Aorta (tissue), 5 donors: ENCODE measurements at regions of chr6 and their contacts with region 1.

Region 1: DNA sequence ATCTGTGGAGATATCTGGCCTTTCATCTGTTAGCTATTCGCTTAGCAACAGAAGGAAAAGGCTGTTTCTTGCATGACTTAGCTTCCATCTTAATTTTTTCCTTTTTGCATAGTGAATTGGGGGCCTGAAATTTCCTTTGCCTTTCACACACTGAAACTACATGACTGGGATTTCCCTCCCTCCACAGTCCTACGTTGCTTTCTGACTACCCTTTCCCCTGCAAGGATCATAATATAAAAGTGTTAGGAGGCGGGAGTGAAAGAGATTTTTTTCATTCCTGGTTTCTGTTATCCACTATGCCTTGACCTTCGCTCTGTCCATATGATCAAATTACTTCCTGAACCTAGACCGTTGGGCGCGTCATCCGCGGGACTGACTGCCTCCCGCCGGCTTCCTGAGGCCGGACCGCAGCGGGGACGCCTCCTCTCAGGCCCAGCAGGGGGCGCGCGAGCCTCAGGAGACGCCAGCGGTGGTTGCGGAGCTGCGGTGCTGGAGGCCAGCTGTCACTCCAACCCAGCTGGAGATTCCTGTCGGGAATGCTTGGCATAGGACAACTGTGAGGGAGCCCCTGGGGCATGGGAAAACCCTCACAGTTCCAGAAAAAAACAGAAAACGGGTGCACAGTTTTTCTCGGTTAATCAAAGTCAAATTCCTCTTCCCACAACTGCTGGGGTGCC is 55.6 kb downstream of the MEP1A start:
- DNase-seq: peak; percentile 90 to 96
- ATAC-seq: peak; percentile 95
- H3K4me3 ChIP-seq: no peak overlapping the region
- H3K27ac ChIP-seq: no peak overlapping the region
- H3K4me1 ChIP-seq: no peaks in the 10 kb centered on the region
- H3K27me3 ChIP-seq: no peaks in the 10 kb centered on the region

Region 2: GRCh38 chr6:46989384-46989783 is 140.6 kb after region 1 on chr6:
- intact Hi-C with region 1: loop called (anchors 1 to 2 kb)
- DNase-seq: no peak
- ATAC-seq: peak; percentile 60
- H3K4me3 ChIP-seq: no peak overlapping the region
- H3K27ac ChIP-seq: no peak overlapping the region
- H3K4me1 ChIP-seq: peaks cover 6 to 7% of the 10 kb centered on the region in 2 donors
- H3K27me3 ChIP-seq: no peaks in the 10 kb centered on the region

Region 3: DNA sequence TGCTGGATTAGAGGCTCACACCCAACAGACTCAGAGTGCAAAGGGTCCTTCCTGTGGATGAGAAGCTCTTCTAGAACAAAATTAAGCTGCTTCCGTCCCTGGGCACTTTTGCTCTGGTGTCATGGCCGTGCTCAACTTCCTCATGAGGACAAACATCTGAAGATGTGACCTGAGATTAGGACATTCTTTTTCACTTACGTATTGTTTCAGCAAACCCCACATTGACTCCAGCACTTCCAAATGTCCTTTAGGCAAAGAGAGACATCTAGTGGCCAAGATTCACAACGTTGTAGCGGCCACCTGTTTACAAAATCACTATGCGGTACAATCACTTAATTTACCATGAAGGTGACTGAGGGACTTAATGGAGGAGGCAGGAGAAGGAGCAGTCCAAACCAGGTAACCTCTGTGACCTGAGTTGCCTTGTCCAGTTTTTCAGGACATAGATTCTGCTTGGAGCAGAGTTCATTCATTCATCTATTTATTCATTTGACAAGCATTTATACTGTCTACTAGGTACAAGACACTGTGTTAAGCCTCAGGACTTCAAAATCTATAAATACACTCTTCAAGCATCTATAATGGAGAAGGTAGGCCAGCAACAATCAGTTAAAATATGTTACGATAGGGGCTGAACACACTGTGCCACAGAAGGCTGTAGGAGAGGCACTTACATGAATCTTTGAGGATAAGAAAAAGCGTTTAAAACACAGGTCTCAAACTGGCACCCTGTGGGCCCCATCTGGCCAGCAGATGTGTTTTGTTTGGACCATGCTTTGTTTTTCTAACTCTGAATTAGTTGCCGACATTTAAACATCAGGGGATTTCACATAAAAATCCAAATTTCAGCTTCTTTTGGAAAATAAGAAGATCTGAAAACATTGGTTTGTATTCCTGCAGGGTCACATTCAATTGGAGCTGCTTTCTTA is 198.9 kb after region 1 on chr6:
- intact Hi-C with region 1: loop called (anchors 2 to 5 kb)
- DNase-seq: no peak
- ATAC-seq: no peak
- H3K4me3 ChIP-seq: no peak overlapping the region
- H3K27ac ChIP-seq: no peak overlapping the region
- H3K4me1 ChIP-seq: no peaks in the 10 kb centered on the region
- H3K27me3 ChIP-seq: peaks cover 0 to 2% of the 10 kb centered on the region in 2 donors